ENCODE measurements at regions of chr22 and their contacts with region 1.

Region 1: DNA sequence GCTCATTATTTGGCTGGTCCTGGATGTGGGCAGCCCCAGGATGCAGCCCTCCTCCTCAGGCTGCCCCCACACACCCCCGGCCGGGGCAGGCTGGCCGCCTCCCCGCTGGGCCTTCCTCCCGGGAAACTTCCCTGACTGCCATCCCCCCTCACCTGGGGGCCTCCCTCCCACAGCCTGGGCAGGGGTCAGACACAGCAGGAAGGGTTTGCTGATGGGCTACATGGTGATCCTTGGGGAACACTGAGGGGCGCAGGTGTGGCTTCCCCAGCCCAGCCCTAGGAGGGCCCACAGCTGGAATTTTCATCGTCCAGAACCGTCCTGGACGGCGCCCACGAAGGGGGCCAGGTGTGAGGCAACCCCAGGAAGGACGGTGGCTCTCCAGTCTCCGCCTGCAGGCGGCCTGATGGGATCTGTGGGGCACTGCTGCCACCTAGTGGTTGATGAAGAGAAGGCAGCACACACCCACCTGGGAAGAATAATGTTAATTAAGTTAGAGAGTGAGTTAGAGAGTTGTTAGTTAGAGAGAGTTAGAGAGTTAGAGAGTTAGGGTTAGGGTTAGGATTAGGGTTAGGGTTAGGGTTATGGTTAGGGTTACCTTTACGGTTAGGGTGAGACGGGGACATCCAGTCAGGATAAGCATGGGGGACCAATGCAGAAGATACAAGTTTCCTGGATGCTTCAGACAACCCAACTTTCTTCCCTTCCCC is 75.9 kb upstream of the PRR5 start:
- DNase-seq: peak; percentile 87
- ATAC-seq: peak; percentile 85
- H3K4me3 Mint-ChIP-seq: no peak overlapping the region
- H3K27ac Mint-ChIP-seq: no peak overlapping the region
- H3K4me1 Mint-ChIP-seq: peaks cover 3% of the 10 kb centered on the region
- H3K27me3 Mint-ChIP-seq: peaks cover 3% of the 10 kb centered on the region

Region 2: DNA sequence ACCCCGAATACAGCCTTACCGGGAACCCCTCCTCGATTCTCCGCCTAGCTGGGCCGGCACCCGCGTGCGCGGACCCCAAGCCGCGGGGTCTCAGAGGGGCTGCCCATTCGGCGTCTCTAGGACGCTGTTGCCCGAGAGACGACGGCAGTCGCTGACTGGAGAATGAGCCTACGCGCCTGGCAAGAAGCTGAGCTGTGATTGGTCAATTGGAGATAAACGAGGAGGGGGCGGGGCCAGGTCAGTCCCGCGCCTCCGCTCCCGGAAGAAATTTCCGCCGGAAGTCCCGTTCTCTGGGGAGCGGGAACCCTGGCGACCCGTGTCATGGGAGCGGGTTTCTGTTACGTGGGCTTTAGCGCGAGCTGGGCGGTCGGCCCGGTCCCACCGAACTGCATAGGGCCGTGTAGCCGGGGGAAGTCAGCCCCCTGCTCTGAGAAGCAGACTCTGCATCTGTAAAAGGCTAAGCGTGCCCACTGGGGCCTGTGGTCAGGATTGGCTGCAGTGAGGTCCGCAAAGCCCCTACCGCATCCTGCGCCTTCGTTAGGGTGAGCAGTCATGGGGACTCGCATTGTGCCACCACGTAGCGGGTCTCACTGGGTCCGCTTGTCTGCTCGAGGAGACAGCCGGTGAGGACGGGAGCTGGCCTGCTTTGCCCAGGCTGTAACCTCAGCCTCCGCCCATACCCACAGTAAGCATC is 813.8 kb before region 1 on chr22 and contains the start of gene EFCAB6:
- CTCF ChIA-PET with region 1: no interaction called
- POLR2A ChIA-PET with region 1: no interaction called
- intact Hi-C with region 1: loop called in 1 of 2 experiments (anchors 10 kb)
- DNase-seq: peak; percentile 95
- ATAC-seq: peak; percentile 89
- H3K4me3 Mint-ChIP-seq: peak within 1 kb of the TSS; percentile 87
- H3K27ac Mint-ChIP-seq: peak within 1 kb of the TSS; percentile 90
- H3K4me1 Mint-ChIP-seq: peaks cover 23% of the 10 kb centered on the region
- H3K27me3 Mint-ChIP-seq: no peaks in the 10 kb centered on the region
- total RNA-seq, gene EFCAB6: 0.56 to 0.71 TPM

Region 3: DNA sequence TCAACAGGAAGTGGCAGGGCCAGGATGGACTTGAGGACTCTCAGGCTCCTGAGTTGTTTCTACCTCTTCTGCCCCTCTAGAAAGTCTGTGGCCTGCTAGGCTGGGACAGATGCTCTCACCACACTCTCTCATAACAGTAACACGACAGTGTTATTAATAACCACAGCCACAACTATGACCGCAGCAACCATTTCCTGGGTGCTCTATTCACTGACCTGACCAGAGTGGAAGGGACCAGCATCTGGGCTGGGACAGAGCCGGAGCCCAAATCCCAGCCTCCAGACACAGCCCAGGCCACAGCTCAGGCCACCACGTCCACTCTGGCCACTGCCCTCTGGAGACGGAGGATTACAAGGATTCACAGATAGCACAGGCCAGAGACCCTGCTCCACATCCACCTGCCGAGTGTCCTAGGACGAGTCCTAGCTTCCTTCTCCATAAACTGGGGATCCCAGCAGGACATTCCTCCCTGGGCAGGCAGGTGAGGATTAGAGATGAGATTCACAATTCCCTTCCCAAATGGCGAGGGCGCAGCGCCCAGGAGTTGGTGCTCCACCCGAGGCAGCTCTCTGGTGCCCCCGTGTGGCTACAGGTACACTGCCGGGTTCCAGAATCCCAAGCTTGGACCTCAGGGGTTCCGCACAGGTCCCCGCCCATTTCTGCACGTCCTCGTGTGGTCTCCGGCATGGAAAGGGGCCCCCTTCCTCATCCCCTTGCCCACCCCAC is 741.4 kb before region 1 on chr22:
- CTCF ChIA-PET with region 1: interaction called, 3 read pairs
- POLR2A ChIA-PET with region 1: no interaction called
- intact Hi-C with region 1: loop called in 1 of 2 experiments (anchors 1 kb)
- DNase-seq: peak; percentile 77
- ATAC-seq: peak; percentile 31
- H3K4me3 Mint-ChIP-seq: no peak overlapping the region
- H3K27ac Mint-ChIP-seq: no peak overlapping the region
- H3K4me1 Mint-ChIP-seq: no peaks in the 10 kb centered on the region
- H3K27me3 Mint-ChIP-seq: peaks cover 15% of the 10 kb centered on the region

Region 4: DNA sequence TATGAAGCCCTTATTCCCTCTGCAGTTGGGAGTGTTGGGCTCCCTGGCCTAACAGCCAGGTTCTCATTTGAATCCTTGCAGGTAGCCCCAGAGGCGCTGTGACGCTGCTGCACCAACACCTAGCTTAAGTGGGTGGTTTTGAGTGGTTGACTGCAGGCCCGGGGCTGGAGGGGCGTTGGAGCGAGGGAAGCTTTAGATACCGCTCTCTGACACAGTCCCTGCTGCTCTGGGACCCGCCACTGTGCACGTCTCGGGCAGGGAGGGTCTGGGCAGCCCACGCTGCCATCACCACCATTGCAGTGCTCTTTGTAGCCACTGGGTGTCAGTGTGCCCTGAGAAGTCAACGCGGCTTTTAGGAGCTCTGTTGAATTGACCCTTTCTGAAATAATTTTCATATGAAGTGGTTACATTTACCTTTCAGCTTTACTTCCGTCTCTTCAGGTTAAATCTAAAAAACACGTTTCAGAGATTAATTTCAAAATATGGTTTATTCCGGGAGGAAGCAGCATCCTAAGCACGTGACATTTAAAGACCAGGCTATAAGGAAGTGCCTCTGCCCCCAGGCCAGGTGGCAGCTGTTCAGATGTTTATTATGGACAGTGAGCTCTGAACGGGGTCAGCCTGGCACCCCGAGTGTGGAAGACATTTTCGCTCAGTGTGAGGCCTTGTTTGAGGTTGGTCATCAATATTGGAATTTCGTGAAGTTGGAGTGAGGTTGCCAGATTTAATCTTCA is 632.9 kb before region 1 on chr22:
- CTCF ChIA-PET with region 1: interaction called, 32 read pairs
- POLR2A ChIA-PET with region 1: no interaction called
- intact Hi-C with region 1: loop called (anchors 1 kb)
- DNase-seq: peak; percentile 74
- ATAC-seq: peak; percentile 74
- H3K4me3 Mint-ChIP-seq: no peak overlapping the region
- H3K27ac Mint-ChIP-seq: no peak overlapping the region
- H3K4me1 Mint-ChIP-seq: peaks cover 29% of the 10 kb centered on the region
- H3K27me3 Mint-ChIP-seq: no peaks in the 10 kb centered on the region

Region 5: DNA sequence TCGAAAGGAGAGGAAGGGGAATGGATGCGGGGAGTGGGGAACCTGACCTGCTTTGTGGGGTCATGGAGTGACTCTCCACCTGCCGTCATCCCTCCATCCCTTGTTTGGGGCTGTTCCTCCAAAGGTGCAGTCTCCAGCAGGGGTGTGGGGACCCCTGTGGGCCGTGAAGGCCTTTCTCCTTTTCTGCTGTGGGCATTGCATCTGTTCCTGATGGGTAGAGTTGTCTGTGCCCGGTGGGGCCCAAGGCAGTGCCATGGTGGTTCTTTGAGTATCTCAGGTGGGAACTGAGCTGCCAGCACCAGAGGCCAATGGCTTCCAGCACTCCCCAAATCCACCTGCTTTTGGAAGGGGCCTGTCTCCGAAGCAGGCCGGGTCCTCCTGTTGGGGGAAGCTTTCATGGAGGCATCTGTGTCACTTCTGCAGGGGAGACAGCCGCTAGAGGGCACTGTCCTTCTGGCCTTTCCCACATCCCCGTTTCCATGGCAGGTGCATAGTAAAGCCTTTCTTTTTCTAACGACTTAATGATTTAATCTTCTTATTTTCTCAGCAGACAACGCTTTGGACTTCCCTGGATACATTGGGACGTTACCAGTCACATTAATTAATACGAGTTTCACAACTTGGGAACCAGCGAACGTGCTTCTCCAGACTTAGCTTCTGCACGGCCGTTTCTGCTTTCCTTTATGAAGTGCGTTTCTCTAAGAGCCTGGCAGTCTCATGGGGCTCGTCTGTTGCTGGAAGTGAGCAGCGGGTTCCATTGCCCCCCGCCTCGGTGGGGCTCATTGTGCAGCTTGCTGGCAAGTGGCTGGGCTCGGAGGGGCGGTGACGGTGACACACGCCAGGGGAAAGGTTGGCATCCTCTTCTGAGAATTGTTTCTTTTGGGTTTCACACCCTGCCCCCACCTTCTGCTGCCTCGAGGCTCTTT is 544.9 kb before region 1 on chr22:
- CTCF ChIA-PET with region 1: interaction called, 5 read pairs
- POLR2A ChIA-PET with region 1: no interaction called
- intact Hi-C with region 1: loop called (anchors 1 kb)
- DNase-seq: peak; percentile 85
- ATAC-seq: peak; percentile 68
- H3K4me3 Mint-ChIP-seq: no peak overlapping the region
- H3K27ac Mint-ChIP-seq: no peak overlapping the region
- H3K4me1 Mint-ChIP-seq: no peaks in the 10 kb centered on the region
- H3K27me3 Mint-ChIP-seq: no peaks in the 10 kb centered on the region

Region 6: DNA sequence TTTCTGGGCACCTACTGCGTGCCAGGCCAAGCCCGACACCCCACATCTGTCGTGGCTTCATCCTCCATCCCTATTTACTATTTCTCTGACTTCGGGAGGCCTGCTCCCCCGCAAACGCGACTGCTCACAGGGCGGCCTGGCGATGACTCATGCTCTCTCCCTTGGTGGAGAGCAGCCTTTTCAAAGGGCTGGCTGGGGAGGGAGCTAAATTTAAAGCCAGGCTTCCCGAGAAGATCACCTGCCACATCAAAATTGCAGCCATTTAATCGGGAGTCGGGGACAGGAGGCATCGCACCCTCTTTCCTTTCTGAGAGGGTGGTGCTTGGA is 288.5 kb before region 1 on chr22:
- CTCF ChIA-PET with region 1: no interaction called
- POLR2A ChIA-PET with region 1: no interaction called
- intact Hi-C with region 1: loop called (anchors 2 to 10 kb)
- DNase-seq: peak; percentile 52
- ATAC-seq: peak; percentile 53
- H3K4me3 Mint-ChIP-seq: no peak overlapping the region
- H3K27ac Mint-ChIP-seq: no peak overlapping the region
- H3K4me1 Mint-ChIP-seq: no peaks in the 10 kb centered on the region
- H3K27me3 Mint-ChIP-seq: peaks cover 4% of the 10 kb centered on the region

Region 7: GRCh38 chr22:45051419-45051818 is 425.3 kb after region 1 on chr22:
- CTCF ChIA-PET with region 1: no interaction called
- POLR2A ChIA-PET with region 1: no interaction called
- intact Hi-C with region 1: no loop called
- DNase-seq: no peak
- ATAC-seq: no peak
- H3K4me3 Mint-ChIP-seq: no peak overlapping the region
- H3K27ac Mint-ChIP-seq: no peak overlapping the region
- H3K4me1 Mint-ChIP-seq: no peaks in the 10 kb centered on the region
- H3K27me3 Mint-ChIP-seq: peaks cover 26% of the 10 kb centered on the region